Endothelial cell of umbilical vein (primary cell): ENCODE measurements at regions of chr11 and their contacts with region 1.

Region 1: DNA sequence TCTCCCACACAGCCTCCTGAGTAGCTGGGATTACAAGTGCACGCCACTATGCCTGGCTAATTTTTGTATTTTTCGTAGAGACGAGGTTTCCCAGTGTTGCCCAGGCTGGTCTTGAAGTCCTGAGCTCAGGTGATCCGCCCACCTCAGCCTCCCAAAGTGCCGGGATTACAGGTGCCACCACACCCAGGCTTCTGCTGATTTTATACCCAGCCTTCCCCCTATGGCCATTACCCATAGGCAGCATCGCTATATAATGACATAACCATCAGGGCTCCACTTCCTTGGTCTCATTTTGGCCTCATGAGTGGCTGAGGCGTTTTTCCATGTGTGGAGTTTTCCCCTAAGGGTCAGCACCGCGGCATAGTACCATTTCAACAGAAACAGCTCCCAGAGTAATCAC is 60.6 kb upstream of the RAB1B start:
- DNase-seq: no peak
- H3K4me3 ChIP-seq: no peak overlapping the region
- H3K27ac ChIP-seq: no peak overlapping the region
- H3K4me1 ChIP-seq: no peaks in the 10 kb centered on the region
- H3K27me3 ChIP-seq: no peaks in the 10 kb centered on the region
- CTCF ChIP-seq: no peak
- POLR2A ChIP-seq: no peak

Region 2: GRCh38 chr11:66251809-66252208 is 43.9 kb after region 1 on chr11:
- CTCF ChIA-PET with region 1: no interaction called
- POLR2A ChIA-PET with region 1: interaction called, 10 read pairs
- dilution Hi-C with region 1: no loop called
- intact Hi-C with region 1: no loop called
- DNase-seq: no peak
- H3K4me3 ChIP-seq: no peak overlapping the region
- H3K27ac ChIP-seq: no peak overlapping the region
- H3K4me1 ChIP-seq: peaks cover 1% of the 10 kb centered on the region
- H3K27me3 ChIP-seq: peaks cover 0 to 4% of the 10 kb centered on the region in 2 experiments
- CTCF ChIP-seq: no peak
- POLR2A ChIP-seq: no peak